ENCODE measurements at regions of chr9 and their contacts with region 1.

Region 1: DNA sequence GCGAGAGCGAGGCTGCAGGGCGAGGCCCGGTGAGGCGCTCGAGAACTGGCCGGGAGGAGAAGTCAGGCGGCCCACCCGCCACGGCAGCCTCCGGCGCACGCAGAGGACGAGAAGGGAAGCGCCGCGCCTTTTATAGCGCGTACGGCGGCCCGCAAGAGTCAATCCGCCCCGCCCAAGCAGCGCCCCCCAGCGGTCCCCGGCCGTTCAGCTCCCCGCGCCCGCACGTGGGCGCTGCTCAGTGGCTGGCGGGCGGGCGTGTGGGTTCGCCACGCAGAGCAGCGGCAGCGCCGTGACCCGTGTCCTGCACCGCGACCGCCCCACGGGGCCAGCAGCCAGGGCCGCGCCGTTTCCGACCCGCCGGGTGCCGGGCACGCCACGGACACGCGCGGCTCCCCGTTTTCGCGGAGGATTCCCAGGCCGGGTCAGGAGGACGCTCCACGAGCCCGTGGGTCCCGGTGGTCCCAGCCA is 14.6 kb downstream of the LCN10 start:
- DNase-seq: peak; percentile 84
- H3K4me3 ChIP-seq: peak overlapping the region; percentile 11 to 89 (median 70)
- H3K27ac ChIP-seq: peak overlapping the region; percentile 41
- H3K4me1 ChIP-seq: peaks cover 32% of the 10 kb centered on the region
- H3K27me3 ChIP-seq: no peaks in the 10 kb centered on the region
- CTCF ChIP-seq: peak; percentile 96
- POLR2A ChIP-seq: peak; percentile 100

Region 2: GRCh38 chr9:136671646-136672430 is 56.3 kb before region 1 on chr9:
- CTCF ChIA-PET with region 1: no interaction called
- POLR2A ChIA-PET with region 1: no interaction called
- dilution Hi-C with region 1: no loop called
- intact Hi-C with region 1: loop called (anchors 2 kb)
- DNase-seq: peak; percentile 62
- H3K4me3 ChIP-seq: peak overlapping the region in 1 of 3 experiments; percentile 3
- H3K27ac ChIP-seq: no peak overlapping the region
- H3K4me1 ChIP-seq: peaks cover 15% of the 10 kb centered on the region
- H3K27me3 ChIP-seq: no peaks in the 10 kb centered on the region
- CTCF ChIP-seq: peak; percentile 77 to 83
- POLR2A ChIP-seq: peak; percentile 88

Region 3: DNA sequence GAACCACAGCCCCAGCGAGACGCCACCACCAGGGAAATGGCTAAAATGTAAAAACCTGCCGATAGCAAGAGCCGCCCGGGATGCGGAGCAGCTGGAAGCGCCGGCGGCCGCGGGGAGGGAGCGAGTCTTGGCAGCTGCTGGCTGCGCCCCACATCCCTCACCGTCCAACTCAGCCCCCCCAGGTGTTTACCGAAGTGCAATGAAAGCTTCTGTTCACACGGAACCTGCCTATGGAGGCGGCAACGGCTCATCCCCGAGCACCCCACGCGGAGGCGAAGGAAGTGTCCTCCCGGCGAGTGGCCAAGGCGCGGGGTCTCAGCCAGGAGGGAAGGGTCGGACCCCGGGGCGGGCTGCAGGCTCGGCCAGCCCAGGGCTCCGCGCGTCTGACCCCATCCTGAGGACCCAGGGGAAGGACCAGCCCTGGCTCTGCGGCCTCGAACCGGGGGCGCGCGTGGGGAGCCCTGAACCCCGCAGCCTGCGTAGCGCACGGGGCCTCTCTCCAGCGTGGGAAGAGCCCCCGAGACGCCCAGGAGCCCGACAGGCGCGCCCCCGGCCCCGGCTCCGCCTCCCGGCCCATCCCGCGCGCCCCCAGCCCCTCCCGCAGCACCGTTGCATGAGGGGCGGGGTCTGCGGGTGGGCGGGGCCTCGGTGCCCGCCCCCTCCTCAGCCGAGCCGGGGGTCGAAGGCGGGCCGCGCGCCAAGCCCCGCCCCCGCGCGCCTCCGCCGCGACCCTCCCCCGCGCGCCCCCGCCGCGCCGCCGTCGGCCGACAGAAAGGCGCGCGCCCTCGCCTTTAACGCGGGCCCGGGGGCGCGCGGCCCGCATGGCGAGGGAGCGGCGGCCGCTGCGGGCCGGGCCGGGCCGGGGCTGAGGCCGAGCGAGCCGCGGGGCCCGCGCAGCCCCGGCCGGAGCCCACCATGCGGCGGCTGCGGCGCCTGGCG is 16.1 kb before region 1 on chr9 and contains the start of gene DIPK1B:
- CTCF ChIA-PET with region 1: interaction called, 16 read pairs
- POLR2A ChIA-PET with region 1: interaction called, 32 read pairs
- dilution Hi-C with region 1: no loop called
- intact Hi-C with region 1: no loop called
- DNase-seq: peak; percentile 48
- H3K4me3 ChIP-seq: peak within 1 kb of the TSS; percentile 68 to 81 (median 75)
- H3K27ac ChIP-seq: peak within 1 kb of the TSS; percentile 96
- H3K4me1 ChIP-seq: peaks cover 27% of the 10 kb centered on the region
- H3K27me3 ChIP-seq: no peaks in the 10 kb centered on the region
- CTCF ChIP-seq: no peak
- POLR2A ChIP-seq: no peak
- total RNA-seq, gene DIPK1B: 242 and 253 TPM in 2 replicates

Region 4: GRCh38 chr9:136742591-136743391 is 14.7 kb after region 1 on chr9 and contains the start of gene LCN10:
- CTCF ChIA-PET with region 1: interaction called, 31 read pairs
- POLR2A ChIA-PET with region 1: interaction called, 9 read pairs
- dilution Hi-C with region 1: no loop called
- intact Hi-C with region 1: no loop called
- DNase-seq: no peak
- H3K4me3 ChIP-seq: no peak within 1 kb of the TSS
- H3K27ac ChIP-seq: no peak within 1 kb of the TSS
- H3K4me1 ChIP-seq: no peaks in the 10 kb centered on the region
- H3K27me3 ChIP-seq: peaks cover 0 to 5% of the 10 kb centered on the region in 2 experiments
- CTCF ChIP-seq: peak; percentile 28 to 64
- POLR2A ChIP-seq: no peak
- total RNA-seq, gene LCN10: not detected in 2 replicates

Region 5: DNA sequence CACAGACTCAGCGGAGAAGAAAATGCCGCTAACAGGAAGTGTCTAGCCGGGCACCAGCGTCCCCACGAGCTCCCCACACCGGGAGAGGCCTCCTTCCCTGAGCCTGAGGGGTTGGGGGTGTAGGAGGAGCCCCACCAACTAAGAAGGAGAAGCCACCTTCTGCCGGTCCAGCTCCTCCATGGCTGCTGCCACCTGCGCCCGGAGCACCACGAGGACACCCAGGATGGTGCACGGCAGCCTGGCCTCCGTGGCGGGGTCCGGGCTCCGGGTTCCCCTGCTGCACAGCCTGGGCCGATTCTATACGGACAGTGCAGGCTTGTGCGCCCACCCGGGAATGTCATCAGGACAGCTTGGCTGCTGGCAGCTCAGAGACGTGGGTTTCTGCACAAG is 29.6 kb after region 1 on chr9:
- CTCF ChIA-PET with region 1: interaction called, 10 read pairs
- POLR2A ChIA-PET with region 1: no interaction called
- dilution Hi-C with region 1: no loop called
- intact Hi-C with region 1: no loop called
- DNase-seq: no peak
- H3K4me3 ChIP-seq: no peak overlapping the region
- H3K27ac ChIP-seq: no peak overlapping the region
- H3K4me1 ChIP-seq: no peaks in the 10 kb centered on the region
- H3K27me3 ChIP-seq: no peaks in the 10 kb centered on the region
- CTCF ChIP-seq: no peak
- POLR2A ChIP-seq: no peak

Region 6: DNA sequence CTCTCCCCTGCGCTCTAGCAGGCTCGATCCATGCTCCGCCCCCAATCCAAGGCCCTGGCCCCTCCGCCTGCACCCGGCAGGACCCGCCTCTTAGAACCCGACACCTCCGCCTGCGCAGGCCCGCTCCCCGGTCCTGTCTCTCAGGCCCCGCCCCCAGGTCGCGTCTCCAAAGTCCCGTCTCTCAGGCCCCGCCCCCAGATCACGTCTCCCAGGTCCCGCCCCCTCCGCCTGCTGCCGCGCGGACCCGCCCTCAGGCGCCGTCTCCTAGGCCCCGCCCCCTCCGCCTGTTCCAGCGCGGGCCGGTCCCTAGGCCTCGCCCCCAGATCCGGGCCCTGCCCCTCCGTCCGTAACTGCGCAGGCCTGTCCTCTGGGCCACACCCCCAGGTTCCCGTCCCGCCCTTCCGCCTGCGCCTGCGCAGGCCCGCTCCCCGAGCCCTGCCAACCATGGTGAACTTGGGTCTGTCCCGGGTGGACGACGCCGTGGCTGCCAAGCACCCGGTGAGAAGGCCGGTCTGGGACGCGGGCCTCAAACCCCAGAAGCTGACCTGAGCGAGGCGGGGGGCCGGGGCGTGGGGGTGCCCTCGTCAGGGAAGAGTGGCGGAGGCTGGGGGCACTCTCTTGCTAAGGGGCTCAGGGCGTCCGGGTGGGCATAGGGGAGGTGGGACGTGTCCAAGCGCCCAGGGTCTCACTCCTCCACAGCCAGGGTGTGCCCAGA is 63.0 kb after region 1 on chr9 and contains the start of gene TMEM141:
- CTCF ChIA-PET with region 1: no interaction called
- POLR2A ChIA-PET with region 1: no interaction called
- dilution Hi-C with region 1: no loop called
- intact Hi-C with region 1: loop called (anchors 5 kb)
- DNase-seq: peak; percentile 99
- H3K4me3 ChIP-seq: peak within 1 kb of the TSS; percentile 54 to 72 (median 59)
- H3K27ac ChIP-seq: peak within 1 kb of the TSS; percentile 31
- H3K4me1 ChIP-seq: peaks cover 7% of the 10 kb centered on the region
- H3K27me3 ChIP-seq: peaks cover 2 to 6% of the 10 kb centered on the region in 2 experiments
- CTCF ChIP-seq: no peak
- POLR2A ChIP-seq: peak; percentile 89
- total RNA-seq, gene TMEM141: 43.2 and 44.9 TPM in 2 replicates

Measured in endothelial cell of umbilical vein (primary cell).